Heart right ventricle (tissue), 16 donors: ENCODE measurements at regions of chr1 and their contacts with region 1.

Region 1: DNA sequence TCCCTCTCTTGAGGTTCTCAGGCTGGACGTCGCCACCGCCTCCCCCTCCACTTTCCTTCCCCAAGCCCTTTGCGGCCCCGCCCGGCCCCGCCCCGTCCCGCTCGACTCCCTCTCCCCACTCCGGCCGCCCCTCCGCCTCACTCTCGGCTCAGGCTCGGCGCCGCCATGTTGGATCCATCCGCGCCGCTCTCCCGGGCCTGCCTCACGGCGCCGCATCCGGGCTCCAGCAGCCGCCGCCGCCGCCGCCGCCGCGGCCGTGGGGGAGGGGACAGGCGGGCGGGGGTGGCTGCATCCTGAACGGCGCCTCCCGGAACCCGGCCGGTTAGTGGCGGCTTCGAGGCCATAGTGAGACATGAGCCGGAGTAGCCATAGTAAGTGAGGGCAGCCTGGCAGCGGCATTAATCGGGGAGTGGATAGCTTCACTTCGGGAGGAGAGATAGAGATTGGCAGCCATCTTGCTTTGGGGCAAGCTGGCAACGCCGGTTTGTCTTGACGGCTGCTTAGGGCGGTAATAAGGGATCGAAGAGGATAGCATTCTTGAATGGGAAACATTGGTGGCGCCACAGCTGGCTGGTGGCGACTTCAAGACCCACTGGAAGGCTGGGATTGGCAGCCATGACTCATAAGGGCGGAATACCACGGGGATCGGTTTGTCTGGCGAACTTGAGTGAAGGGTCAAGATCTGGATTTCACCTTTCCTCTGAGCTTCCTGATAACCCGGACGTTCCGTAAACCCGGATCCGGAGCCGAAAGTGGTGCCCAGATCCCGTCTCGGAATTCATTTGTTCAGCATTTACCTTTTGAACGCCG is at the start of gene DEDD:
- DNase-seq: peak; percentile 90 to 97
- ATAC-seq: peak; percentile 95 to 97 (median 96)
- H3K4me3 ChIP-seq: peak within 1 kb of the TSS; percentile 55 to 85 (median 74)
- H3K27ac ChIP-seq: peak within 1 kb of the TSS; percentile 89 to 99 (median 96)
- H3K4me1 ChIP-seq: peaks cover 4 to 63% (median 45%) of the 10 kb centered on the region in 9 donors
- H3K27me3 ChIP-seq: no peaks in the 10 kb centered on the region
- CTCF ChIP-seq: peak in 2 of 9 donors; percentile 18 to 39
- total RNA-seq, gene DEDD: 21.7 to 33.0 (median 26.3) TPM

Region 2: DNA sequence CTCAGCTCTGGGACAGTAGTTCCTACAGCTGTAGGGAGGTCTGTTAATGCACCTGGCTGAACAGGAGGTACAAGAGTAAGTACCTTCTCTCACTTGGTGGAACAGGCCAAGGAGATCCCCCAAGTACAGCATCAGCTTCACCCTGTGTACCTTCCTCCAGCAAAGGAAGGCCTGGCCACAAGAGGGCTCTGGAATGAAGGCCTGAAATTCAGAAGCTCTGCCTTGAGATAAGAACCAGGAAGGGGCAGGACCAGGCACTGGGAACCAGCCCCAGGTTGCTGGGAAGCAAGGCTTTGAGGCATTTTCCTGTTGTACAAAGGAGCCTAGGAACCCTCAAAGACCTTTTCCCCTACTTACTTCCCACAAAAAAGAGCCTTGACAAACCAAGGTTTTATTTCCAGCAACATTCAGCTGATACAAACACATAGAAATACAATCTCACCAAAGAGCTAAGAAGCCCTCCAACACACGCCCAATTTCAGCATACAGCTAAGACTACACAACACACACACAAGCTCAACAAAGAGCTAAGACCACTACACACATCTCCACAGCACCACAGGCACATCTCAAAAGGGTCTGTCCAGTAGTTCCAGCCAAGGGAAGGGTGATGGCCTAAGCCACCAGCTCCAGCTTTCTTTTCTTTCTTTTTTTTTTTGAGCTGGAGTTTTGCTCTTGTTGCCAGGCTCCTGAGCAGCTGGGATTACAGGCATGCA is 135.1 kb before region 1 on chr1:
- intact Hi-C with region 1: loop called in 6 of 10 experiments (anchors 5 to 10 kb)
- DNase-seq: peak; percentile 45 to 83
- ATAC-seq: peak; percentile 89 to 95 (median 92)
- H3K4me3 ChIP-seq: no peak overlapping the region
- H3K27ac ChIP-seq: peak overlapping the region in 9 of 10 donors; percentile 47 to 82 (median 75)
- H3K4me1 ChIP-seq: peaks cover 0 to 30% (median 12%) of the 10 kb centered on the region in 9 donors
- H3K27me3 ChIP-seq: no peaks in the 10 kb centered on the region
- CTCF ChIP-seq: peak; percentile 43 to 83 (median 68)

Region 3: DNA sequence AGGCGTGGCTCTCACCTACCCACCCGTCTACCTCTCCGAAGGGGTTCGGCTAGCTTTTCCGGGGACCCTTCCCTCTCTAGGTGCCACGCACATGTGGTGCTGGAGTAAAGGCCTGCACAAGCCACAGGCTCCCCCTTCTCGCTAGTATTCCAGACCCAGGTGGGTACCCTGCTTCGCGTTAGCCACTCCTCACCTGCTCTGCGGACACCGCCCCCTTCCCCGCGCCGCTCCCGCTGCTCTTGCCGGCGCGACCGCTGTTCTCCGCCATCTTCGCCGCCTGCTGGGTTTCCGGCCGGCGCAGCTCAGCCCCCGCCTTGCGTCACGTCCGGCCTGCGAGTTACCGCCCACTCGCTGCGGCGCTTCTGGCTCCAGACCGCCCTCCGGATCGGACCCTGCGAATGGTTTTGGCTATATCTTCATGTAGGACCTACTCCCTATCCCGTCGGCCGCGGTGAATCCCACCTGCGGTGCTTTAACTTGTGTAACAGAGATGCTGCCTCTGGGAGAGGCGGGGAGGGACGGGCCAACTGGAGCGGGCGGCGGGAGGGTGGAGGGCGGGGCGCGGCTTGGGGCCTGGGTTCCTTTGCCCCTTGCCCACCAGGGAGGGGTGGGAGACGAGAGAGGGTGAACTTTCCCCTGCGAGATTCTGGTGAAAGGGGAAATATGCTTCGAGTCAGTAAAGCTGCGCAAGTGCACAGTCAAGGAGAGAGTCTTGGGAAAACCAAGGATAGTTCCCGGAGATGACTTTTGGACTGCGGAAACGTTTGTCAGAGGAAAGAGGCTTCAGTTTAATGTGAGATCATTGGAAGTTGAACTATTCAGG is 14.6 kb before region 1 on chr1 and contains the starts of genes NIT1 and PFDN2:
- intact Hi-C with region 1: loop called in 1 of 10 experiments (anchors 1 kb)
- DNase-seq: peak; percentile 87 to 88
- ATAC-seq: peak; percentile 91 to 95 (median 94)
- H3K4me3 ChIP-seq: peak within 1 kb of the TSS; percentile 70 to 100 (median 94)
- H3K27ac ChIP-seq: peak within 1 kb of the TSS; percentile 73 to 97 (median 94)
- H3K4me1 ChIP-seq: peaks cover 14 to 83% (median 53%) of the 10 kb centered on the region in 9 donors
- H3K27me3 ChIP-seq: no peaks in the 10 kb centered on the region
- CTCF ChIP-seq: peak in 1 of 9 donors; percentile 17
- total RNA-seq, gene NIT1: 24.1 to 41.2 (median 33.4) TPM
- total RNA-seq, gene PFDN2: 44.6 to 78.7 (median 54.1) TPM

Region 4: DNA sequence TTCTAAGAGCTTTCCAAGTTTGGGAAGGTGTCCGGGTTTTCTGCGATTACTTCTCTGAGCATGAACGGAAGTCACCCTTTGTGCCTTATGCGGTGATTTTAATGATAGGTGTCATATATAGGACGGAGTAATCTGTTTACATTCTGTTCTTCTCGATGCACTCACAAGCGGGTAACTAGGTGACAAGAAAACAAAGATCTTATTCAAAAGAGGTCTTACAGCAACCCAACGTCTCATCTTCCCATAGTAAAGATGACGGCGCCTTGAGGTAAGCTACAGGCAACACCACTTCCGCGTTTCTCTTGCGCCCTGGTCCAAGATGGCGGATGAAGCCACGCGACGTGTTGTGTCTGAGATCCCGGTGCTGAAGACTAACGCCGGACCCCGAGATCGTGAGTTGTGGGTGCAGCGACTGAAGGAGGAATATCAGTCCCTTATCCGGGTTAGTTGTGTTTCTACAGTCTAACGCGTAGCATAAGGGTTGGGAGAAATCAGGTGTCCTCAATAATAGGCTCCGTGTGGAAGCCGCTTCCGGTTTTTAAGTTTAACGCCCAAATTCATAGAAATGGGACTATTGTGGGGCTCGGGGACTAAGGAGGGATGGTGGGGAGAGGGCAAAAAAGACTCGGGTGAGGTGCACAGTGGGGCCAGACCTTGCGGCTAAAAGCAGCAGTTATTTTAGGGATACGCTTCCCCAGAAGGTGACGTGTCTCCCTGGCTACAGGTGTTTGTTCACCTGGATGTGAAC is 21.2 kb after region 1 on chr1 and contains the start of gene UFC1:
- intact Hi-C with region 1: loop called in 1 of 10 experiments (anchors 2 kb)
- DNase-seq: peak; percentile 70 to 87
- ATAC-seq: peak; percentile 83 to 95 (median 94)
- H3K4me3 ChIP-seq: peak within 1 kb of the TSS; percentile 60 to 91 (median 82)
- H3K27ac ChIP-seq: peak within 1 kb of the TSS; percentile 83 to 96 (median 93)
- H3K4me1 ChIP-seq: peaks cover 0 to 25% (median 15%) of the 10 kb centered on the region in 9 donors
- H3K27me3 ChIP-seq: no peaks in the 10 kb centered on the region
- CTCF ChIP-seq: no peak
- total RNA-seq, gene UFC1: 63.9 to 88.3 (median 74.9) TPM

Region 5: GRCh38 chr1:161165742-161166668 is 33.4 kb after region 1 on chr1 and contains the start of gene PPOX:
- intact Hi-C with region 1: loop called in 1 of 10 experiments (anchors 5 kb)
- DNase-seq: peak; percentile 93 to 97
- ATAC-seq: peak; percentile 94 to 97 (median 96)
- H3K4me3 ChIP-seq: peak within 1 kb of the TSS; percentile 62 to 92 (median 78)
- H3K27ac ChIP-seq: peak within 1 kb of the TSS; percentile 86 to 94 (median 88)
- H3K4me1 ChIP-seq: peaks cover 10 to 41% (median 31%) of the 10 kb centered on the region in 9 donors
- H3K27me3 ChIP-seq: no peaks in the 10 kb centered on the region
- CTCF ChIP-seq: peak in 8 of 9 donors; percentile 6 to 62 (median 45)
- total RNA-seq, gene PPOX: 8.5 to 19.8 (median 15.0) TPM

Region 6: GRCh38 chr1:161201828-161202725 is 69.5 kb after region 1 on chr1 and contains the start of gene NDUFS2:
- intact Hi-C with region 1: loop called in 1 of 10 experiments (anchors 2 kb)
- DNase-seq: peak; percentile 95 to 99
- ATAC-seq: peak; percentile 79 to 91 (median 88)
- H3K4me3 ChIP-seq: peak within 1 kb of the TSS; percentile 72 to 94 (median 85)
- H3K27ac ChIP-seq: peak within 1 kb of the TSS; percentile 93 to 100 (median 98)
- H3K4me1 ChIP-seq: peaks cover 48 to 92% (median 85%) of the 10 kb centered on the region in 9 donors
- H3K27me3 ChIP-seq: no peaks in the 10 kb centered on the region
- CTCF ChIP-seq: peak in 2 of 9 donors; percentile 10 to 21
- total RNA-seq, gene NDUFS2: 244 to 370 (median 318) TPM